PC-9 (cell line): ENCODE measurements at regions of chr5 and their contacts with region 1.

Region 1: DNA sequence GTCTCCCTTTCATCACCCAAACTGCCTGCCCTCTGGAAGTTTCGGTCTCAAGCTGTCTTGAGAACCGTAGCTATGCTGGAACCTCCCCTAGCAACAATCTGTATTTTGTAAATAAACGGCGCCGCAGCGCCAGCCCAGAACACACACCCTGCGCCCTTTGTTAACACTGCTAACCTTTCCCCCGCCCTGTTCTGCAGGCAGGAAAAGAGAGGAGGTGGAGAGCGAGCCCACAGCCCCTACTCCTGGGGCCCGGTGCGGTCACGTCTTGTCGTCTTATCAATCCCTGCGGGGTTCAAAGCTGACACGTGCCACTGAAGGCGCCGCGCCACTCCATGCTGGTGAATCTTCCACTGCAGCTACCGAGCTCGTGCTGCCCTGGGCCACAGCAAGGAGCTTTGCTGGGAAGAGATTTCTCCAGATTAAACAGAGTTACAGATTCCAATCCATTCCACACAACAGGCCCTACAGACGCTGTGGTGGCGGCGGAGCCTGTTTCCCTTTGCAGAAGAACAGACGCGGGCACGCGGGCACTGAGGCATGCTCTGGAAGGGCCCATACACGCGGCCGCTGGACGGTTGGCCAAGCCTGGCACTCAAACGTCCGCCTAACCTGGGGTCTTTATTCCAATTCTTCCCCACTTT is 25.3 kb downstream of the ZDHHC11B start:
- DNase-seq: peak; percentile 85 to 91
- H3K4me3 ChIP-seq: no peak overlapping the region
- H3K27ac ChIP-seq: no peak overlapping the region
- H3K4me1 ChIP-seq: 0 out of 2 replicates have a peak, but pooled peaks cover 4% of the 10 kb centered on the region
- H3K27me3 ChIP-seq: peaks cover 80% of the 10 kb centered on the region
- CTCF ChIP-seq: no peak

Region 2: GRCh38 chr5:849651-850301 is 90.5 kb after region 1 on chr5:
- CTCF ChIA-PET with region 1: no interaction called
- POLR2A ChIA-PET with region 1: no interaction called
- intact Hi-C with region 1: loop called (anchors 2 kb)
- DNase-seq: no peak
- H3K4me3 ChIP-seq: no peak overlapping the region
- H3K27ac ChIP-seq: no peak overlapping the region
- H3K4me1 ChIP-seq: no peaks in the 10 kb centered on the region
- H3K27me3 ChIP-seq: peaks cover 41% of the 10 kb centered on the region
- CTCF ChIP-seq: no peak